ENCODE measurements at regions of chr20 and their contacts with region 1.

Region 1: GRCh38 chr20:25065625-25066338 is 7.8 kb upstream of the ACSS1 start:
- DNase-seq: peak; percentile 76
- ATAC-seq: peak; percentile 82
- H3K4me3 Mint-ChIP-seq: no peak overlapping the region
- H3K27ac Mint-ChIP-seq: no peak overlapping the region
- H3K4me1 Mint-ChIP-seq: peaks cover 5% of the 10 kb centered on the region
- H3K27me3 Mint-ChIP-seq: peaks cover 20% of the 10 kb centered on the region

Region 2: DNA sequence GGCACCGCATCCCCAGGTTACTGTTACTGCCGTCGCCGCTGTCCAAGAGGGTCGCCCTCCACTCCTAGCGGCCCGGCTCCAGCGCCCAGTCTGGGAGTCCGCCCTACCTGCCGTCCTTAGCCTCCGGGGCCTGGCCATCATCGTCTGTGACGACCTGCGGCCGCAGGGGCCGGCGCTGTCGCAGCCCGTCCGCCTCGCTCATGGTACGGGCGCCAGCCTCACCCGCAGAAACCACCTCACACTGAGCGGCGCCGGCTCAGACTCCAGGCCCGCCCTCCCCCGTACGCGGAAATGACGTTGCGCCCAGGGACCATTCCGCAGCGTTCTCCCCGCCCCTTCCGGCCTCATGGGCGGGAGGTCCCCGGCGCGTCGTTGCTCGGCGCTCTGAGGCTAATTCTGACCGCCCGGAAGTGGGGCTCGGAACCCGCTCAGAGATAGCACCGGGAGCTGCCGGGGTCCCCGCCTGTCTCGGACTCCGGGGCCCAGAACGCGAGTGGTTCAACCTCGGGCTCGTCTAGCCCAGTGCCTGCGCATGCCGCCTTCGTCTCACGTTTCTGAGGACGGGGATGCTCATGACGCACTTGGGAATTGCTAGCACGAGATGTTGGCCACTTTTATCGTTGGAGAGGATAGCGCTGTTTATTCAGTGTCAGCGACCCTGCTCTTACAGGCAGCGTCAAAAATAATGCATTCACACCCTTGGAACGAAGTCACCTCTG is 73.1 kb before region 1 on chr20 and contains the start of gene APMAP:
- CTCF ChIA-PET with region 1: interaction called, 128 read pairs
- DNase-seq: peak; percentile 96
- ATAC-seq: peak; percentile 95
- H3K4me3 Mint-ChIP-seq: peak within 1 kb of the TSS; percentile 98
- H3K27ac Mint-ChIP-seq: peak within 1 kb of the TSS; percentile 93
- H3K4me1 Mint-ChIP-seq: peaks cover 50% of the 10 kb centered on the region
- H3K27me3 Mint-ChIP-seq: no peaks in the 10 kb centered on the region
- total RNA-seq, gene APMAP: 47.5 to 56.0 TPM

Region 3: DNA sequence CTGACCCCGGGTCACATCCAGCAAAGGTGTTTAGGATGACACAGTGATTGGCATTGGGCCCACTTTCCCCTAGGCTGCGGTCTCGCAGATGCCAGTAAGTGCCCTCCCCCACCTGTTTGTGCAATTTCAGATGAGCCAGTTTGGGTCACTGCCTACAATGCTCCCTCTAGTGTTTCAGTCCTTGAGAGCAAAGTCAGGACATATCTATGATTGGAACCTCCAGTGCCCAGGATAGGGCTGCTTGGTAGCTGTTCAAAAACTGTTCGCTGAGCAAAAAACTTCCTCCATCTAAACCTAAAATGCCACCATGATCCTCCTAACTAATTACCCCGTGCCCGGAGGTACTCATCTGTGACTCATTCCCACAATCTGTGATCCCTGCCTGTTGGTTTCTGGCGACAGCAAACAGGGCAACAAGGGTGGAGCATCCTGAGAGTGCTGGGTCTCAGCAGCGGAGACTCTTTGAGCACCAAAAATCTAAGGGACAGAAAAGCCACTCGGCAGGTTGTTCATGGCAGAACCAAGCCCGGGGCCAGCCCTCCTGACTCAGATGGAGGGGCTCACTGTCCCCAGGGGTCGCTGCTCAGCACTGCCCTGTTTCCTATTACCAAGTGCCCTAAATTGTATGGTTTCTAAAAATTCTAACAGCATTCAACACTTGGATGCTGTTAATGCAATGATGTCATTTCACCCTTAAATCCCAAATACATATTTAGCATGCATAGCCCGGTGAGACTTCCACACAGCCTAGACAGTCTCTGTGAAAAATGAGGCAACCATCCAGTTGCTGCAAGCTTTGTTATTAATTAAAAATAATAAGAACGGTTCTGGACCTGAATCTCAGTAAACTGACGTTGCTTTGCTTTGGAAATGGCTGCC is 11.2 kb after region 1 on chr20:
- CTCF ChIA-PET with region 1: no interaction called
- DNase-seq: no peak
- ATAC-seq: no peak
- H3K4me3 Mint-ChIP-seq: no peak overlapping the region
- H3K27ac Mint-ChIP-seq: no peak overlapping the region
- H3K4me1 Mint-ChIP-seq: peaks cover 5% of the 10 kb centered on the region
- H3K27me3 Mint-ChIP-seq: peaks cover 81% of the 10 kb centered on the region